Mammary epithelial cell (primary cell): ENCODE measurements at regions of chr6 and their contacts with region 1.

Region 1: GRCh38 chr6:149903938-149904611 is 6.2 kb upstream of the RAET1E start:
- DNase-seq: no peak
- H3K4me3 ChIP-seq: no peak overlapping the region
- H3K27ac ChIP-seq: no peak overlapping the region
- H3K4me1 ChIP-seq: peaks cover 22% of the 10 kb centered on the region
- H3K27me3 ChIP-seq: no peaks in the 10 kb centered on the region
- CTCF ChIP-seq: no peak

Region 2: DNA sequence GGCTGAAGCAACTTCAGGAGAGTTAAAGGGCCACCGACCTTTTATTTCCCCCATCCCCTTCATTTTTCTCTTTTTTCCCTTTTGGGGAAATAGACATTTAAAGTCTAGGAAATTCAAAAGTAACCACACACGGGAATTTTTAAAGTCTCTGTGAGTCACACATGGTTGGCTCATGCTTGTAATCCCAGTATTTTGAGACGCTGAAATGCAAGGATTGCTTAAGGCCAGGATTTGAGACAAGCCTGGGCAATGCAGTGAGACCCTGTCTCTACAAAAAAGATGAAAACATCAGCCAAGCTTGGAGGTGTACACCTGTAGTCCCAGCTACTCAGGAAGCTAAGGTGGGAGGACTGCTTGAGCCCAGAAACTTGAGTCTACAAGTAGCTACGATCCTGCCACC is 289.7 kb before region 1 on chr6:
- CTCF ChIA-PET with region 1: no interaction called
- dilution Hi-C with region 1: no loop called
- in situ Hi-C with region 1: no loop called
- intact Hi-C with region 1: no loop called
- DNase-seq: peak; percentile 68
- H3K4me3 ChIP-seq: no peak overlapping the region
- H3K27ac ChIP-seq: no peak overlapping the region
- H3K4me1 ChIP-seq: peaks cover 3% of the 10 kb centered on the region
- H3K27me3 ChIP-seq: no peaks in the 10 kb centered on the region
- CTCF ChIP-seq: no peak

Region 3: GRCh38 chr6:149723771-149724417 is 180.2 kb before region 1 on chr6:
- CTCF ChIA-PET with region 1: no interaction called
- dilution Hi-C with region 1: loop called (anchors 10 kb)
- in situ Hi-C with region 1: no loop called
- intact Hi-C with region 1: no loop called
- DNase-seq: peak; percentile 74
- H3K4me3 ChIP-seq: no peak overlapping the region
- H3K27ac ChIP-seq: no peak overlapping the region
- H3K4me1 ChIP-seq: no peaks in the 10 kb centered on the region
- H3K27me3 ChIP-seq: no peaks in the 10 kb centered on the region
- CTCF ChIP-seq: peak; percentile 89 to 92

Region 4: GRCh38 chr6:149825292-149825691 is 78.8 kb before region 1 on chr6:
- CTCF ChIA-PET with region 1: no interaction called
- dilution Hi-C with region 1: loop called (anchors 5 kb)
- in situ Hi-C with region 1: no loop called
- intact Hi-C with region 1: no loop called
- DNase-seq: no peak
- H3K4me3 ChIP-seq: no peak overlapping the region
- H3K27ac ChIP-seq: no peak overlapping the region
- H3K4me1 ChIP-seq: no peaks in the 10 kb centered on the region
- H3K27me3 ChIP-seq: no peaks in the 10 kb centered on the region
- CTCF ChIP-seq: no peak

Region 5: DNA sequence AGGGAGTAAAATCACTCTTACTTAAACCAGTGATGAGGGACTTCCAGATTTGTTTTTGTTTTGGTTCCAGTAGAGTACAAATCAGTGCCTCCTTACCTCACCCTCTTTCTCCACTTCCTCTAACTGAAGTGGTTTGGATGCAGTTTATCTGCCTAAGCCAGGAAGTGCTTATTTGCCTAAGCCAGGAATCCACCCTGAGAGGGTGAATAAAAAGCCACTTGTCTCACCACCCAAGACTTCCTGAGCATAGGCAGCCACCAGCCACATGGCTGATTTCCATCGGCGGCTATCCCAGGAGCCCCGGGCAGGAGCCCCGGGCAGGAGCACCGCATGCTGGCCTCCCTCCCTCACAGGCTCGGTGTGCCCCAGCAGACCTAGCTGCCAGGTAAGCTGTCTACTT is 51.9 kb before region 1 on chr6:
- CTCF ChIA-PET with region 1: no interaction called
- dilution Hi-C with region 1: loop called (anchors 10 kb)
- in situ Hi-C with region 1: no loop called
- intact Hi-C with region 1: no loop called
- DNase-seq: peak; percentile 77
- H3K4me3 ChIP-seq: no peak overlapping the region
- H3K27ac ChIP-seq: peak overlapping the region; percentile 64
- H3K4me1 ChIP-seq: peaks cover 59% of the 10 kb centered on the region
- H3K27me3 ChIP-seq: no peaks in the 10 kb centered on the region
- CTCF ChIP-seq: no peak

Region 6: DNA sequence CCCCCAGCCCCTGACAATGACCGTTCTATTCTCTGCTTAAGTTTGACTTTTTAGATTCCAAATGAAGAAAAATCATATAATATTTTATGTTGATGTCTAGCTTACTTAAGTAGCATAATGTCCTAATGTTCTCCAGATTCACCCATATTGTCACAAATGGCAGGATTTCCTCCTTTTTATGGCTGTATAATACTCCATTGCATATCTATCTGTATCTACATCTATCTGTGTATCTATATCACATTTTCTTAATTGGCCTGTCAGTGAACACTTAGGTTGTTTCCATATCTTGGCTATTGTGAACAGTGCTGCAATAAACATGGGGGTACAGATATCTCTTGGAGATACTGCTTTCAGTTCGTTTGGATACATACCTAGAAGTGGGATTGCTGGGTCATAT is 32.9 kb before region 1 on chr6:
- CTCF ChIA-PET with region 1: no interaction called
- dilution Hi-C with region 1: loop called (anchors 5 kb)
- in situ Hi-C with region 1: no loop called
- intact Hi-C with region 1: no loop called
- DNase-seq: no peak
- H3K4me3 ChIP-seq: no peak overlapping the region
- H3K27ac ChIP-seq: no peak overlapping the region
- H3K4me1 ChIP-seq: peaks cover 14% of the 10 kb centered on the region
- H3K27me3 ChIP-seq: no peaks in the 10 kb centered on the region
- CTCF ChIP-seq: no peak

Region 7: GRCh38 chr6:149915970-149916865 is 12.1 kb after region 1 on chr6:
- CTCF ChIA-PET with region 1: interaction called, 4 read pairs
- dilution Hi-C with region 1: no loop called
- in situ Hi-C with region 1: no loop called
- intact Hi-C with region 1: loop called (anchors 2 kb)
- DNase-seq: no peak
- H3K4me3 ChIP-seq: no peak overlapping the region
- H3K27ac ChIP-seq: no peak overlapping the region
- H3K4me1 ChIP-seq: peaks cover 5% of the 10 kb centered on the region
- H3K27me3 ChIP-seq: no peaks in the 10 kb centered on the region
- CTCF ChIP-seq: no peak

Region 8: DNA sequence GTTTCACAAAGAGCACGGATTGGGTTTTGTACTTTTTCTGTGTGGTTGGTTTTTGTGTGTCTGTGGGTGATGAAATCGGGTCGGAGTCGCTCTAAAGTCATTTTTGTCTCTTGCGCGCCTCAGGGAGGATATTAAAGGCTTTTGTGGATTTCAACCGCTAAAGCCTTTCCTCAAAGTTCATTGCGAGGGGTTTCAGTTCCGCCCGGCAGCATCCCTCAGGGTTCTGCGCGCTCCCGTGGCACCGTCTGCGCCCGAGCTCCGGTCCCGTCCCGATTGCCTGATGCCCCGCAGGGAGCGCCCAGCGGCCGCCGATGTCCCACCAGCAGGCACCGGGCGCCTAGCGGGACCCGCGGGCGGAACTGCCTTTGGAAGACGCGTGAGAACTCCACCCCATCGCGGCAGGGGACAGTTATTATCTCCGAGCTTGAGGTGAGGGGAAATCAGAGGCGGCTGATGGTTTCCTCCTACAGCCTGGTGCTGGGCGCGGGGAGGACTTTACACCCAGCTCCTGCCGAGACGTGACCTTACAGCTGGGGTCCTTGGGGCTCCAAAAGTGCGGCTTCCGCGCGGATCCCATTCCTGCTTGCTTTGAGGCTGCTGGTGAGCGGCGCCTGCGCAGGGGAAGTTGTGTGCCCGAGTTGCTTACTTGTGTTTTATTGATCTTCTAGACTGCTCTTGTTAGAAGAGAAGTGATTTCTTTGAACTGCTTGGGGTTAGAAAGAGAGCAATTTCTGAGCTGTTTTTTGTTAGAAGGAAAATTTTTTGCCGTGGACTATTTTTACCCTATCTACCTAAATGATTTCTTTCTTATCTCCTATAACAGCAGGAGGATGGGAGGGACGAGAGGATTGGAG is 86.8 kb after region 1 on chr6:
- CTCF ChIA-PET with region 1: no interaction called
- dilution Hi-C with region 1: loop called (anchors 5 kb)
- in situ Hi-C with region 1: no loop called
- intact Hi-C with region 1: no loop called
- DNase-seq: no peak
- H3K4me3 ChIP-seq: peak overlapping the region; percentile 38 to 42 (median 41)
- H3K27ac ChIP-seq: no peak overlapping the region
- H3K4me1 ChIP-seq: peaks cover 18% of the 10 kb centered on the region
- H3K27me3 ChIP-seq: peaks cover 59% of the 10 kb centered on the region
- CTCF ChIP-seq: no peak